ENCODE measurements at regions of chr17 and their contacts with region 1.

Region 1: DNA sequence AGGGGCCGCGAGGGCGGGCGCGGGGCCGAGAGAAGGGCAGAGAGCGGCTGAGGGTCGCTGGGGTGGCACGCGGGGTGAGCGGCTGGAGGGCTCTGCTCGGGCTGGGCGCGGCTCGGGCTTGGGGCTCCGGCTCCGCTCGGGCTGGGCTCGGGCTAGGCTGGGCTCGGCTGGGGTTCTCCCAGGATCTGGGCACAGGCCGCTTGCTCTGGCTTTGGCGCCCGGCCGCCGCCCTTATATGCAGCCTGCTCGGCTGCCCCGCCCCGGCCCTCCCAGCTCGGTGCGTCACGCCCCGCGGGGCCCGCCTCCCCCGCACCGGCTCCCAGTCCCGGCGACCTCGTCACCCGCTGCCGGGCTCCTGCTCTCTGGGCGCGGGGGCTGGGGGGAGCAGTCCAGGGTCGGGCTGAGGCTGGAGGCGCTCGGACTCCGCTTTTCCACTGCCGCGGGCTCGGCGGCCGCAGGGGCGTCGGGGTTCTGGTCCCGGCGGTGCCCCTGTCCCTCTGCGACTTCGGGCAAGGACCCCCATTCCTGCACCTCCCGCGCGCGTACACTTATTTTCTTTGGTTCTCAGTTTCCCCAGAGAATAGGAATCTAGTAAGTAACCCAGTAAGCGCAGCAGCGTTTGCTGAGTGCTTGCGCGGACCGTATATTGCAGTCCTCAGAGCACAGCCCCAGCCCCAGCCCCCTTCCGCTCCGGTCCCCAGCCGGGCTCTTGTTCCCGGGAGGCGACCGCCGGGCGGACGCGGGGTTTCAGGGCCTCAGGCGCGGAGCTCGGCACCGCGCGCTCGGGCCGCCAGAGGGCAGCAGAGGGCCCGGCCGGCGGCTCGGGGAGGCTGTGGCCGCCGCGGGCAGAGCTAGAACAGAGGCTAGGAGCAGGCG is at the start of gene RASD1:
- DNase-seq: peak; percentile 85
- ATAC-seq: peak; percentile 86
- H3K4me3 Mint-ChIP-seq: peak within 1 kb of the TSS; percentile 52
- H3K27ac Mint-ChIP-seq: no peak within 1 kb of the TSS
- H3K4me1 Mint-ChIP-seq: peaks cover 4% of the 10 kb centered on the region
- H3K27me3 Mint-ChIP-seq: peaks cover 15% of the 10 kb centered on the region
- total RNA-seq, gene RASD1: 2.2 to 2.5 TPM

Region 2: DNA sequence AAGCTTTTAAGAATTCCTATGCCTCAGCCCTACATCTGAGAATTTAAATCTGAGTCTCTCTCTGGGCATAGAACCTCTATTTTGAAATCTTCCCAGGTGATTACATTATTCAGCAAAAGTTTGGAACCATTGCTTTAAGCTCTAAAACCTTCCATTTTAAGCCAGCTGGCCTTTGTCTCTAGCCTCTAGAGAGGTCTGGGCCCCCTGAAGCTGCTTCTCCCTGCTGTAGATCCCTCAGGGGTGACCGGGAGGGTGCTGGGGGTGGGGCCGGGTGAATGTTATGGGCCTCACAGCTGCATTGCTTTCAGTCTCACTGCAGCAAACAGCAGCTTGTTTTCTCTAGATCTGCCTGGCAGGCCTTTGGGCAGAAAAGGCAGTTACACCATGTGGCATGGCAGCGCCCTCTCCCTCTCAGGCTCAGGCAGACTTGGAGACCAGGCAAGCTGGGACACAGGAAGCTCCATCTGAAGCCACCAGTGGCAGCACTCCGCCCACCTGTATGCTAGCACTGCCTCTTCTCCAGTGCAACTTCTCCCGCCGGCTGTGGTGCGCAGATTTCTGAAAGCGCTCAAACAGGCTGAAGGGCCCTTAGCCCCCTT is 387.9 kb before region 1 on chr17:
- CTCF ChIA-PET with region 1: no interaction called
- DNase-seq: no peak
- ATAC-seq: no peak
- H3K4me3 Mint-ChIP-seq: no peak overlapping the region
- H3K27ac Mint-ChIP-seq: no peak overlapping the region
- H3K4me1 Mint-ChIP-seq: peaks cover 34% of the 10 kb centered on the region
- H3K27me3 Mint-ChIP-seq: no peaks in the 10 kb centered on the region

Region 3: DNA sequence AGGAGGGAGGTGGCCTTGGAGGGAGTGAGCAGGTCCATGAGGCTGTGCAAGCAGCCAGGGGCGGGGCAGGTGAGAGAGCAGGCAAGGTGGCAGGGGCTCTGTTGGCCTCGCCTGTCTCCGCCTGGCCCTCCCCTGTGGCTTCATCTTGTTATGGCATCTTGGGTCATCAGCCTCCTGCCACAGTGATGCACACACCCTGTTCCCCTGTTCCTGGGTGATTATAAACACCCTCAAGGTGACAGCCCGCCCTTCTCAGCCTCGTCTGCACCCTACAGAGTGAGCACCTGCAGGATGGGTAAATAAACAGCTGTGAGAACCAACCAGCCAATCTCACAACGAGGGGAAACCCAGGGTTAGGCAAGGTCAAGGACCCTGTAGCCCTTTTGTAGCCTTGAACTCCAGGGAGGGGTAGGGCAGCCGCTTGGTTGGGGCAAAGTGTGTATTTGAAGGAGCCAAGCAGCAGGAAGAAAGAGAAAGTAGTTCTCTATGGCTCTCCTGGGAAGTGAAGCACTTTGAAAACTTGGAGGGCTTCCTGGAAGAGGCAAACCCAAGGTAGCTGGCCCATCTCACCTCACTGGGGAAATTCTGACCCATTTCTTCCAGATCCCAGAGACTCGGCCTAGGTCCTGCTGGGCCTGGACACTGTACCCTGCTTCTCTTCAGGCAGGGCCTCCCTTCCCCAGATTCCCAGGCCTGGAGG is 132.6 kb before region 1 on chr17:
- CTCF ChIA-PET with region 1: interaction called, 12 read pairs
- DNase-seq: no peak
- ATAC-seq: no peak
- H3K4me3 Mint-ChIP-seq: no peak overlapping the region
- H3K27ac Mint-ChIP-seq: no peak overlapping the region
- H3K4me1 Mint-ChIP-seq: no peaks in the 10 kb centered on the region
- H3K27me3 Mint-ChIP-seq: peaks cover 36% of the 10 kb centered on the region

Region 4: DNA sequence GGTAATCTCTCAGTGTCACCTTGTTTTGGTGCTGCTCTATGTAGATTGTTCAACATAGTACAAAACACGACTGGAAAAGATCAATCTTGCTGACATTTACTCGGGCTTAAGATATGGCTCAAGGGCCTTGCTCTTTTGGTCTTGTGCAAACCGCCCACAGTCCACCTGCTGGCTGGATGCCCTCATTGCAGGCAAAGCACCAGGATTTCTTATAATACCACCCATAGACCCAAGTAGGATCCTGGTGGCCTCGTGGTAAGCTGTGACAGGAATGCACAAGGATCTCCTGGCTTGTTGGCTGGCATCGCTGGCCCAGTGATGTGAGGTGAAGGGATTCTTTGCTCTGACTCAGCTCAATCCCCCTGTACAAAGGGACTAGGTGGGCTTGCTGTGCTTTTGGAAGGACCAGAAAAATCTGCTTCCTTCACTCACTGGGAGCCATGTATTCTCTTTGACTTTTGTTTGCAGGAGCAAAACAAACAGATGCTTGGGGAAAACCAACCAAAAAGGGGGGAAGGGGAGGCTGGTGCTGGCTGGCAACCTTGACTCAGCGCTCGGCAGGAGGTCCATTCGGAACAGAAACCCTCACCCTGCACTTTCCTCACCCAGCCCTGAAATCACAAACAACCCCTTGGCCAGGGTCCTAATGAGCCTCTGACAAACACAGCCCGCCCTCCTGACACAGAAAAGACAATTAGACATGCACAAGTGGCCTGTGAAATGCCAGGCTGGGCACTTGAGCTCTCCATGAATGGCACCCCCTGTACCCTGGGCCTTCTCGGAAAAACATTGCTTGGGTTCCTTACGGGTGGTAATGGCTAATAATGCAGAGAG is 56.2 kb before region 1 on chr17:
- CTCF ChIA-PET with region 1: interaction called, 12 read pairs
- DNase-seq: peak; percentile 83
- ATAC-seq: peak; percentile 88
- H3K4me3 Mint-ChIP-seq: no peak overlapping the region
- H3K27ac Mint-ChIP-seq: peak overlapping the region; percentile 28
- H3K4me1 Mint-ChIP-seq: peaks cover 2% of the 10 kb centered on the region
- H3K27me3 Mint-ChIP-seq: no peaks in the 10 kb centered on the region

Region 5: DNA sequence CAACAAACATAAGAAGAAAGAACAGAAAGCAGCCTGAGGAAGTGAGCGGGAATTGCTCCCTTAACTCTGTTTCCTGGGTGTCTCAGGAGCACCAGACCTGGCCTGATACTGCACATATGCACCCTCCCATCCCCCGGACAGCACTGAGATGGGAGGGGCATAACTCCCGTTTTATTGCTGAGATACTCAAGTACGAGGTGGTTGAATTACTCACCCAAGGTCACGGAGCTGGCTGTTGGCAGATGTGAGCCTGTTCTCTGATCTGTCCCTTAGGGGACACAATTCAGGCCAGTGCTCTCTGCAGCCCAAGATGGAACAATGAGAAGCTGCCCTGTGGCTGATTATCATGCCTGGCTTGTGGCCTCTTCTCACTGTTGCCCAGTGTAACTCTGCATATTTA is 28.7 kb before region 1 on chr17:
- CTCF ChIA-PET with region 1: interaction called, 12 read pairs
- DNase-seq: no peak
- ATAC-seq: no peak
- H3K4me3 Mint-ChIP-seq: no peak overlapping the region
- H3K27ac Mint-ChIP-seq: no peak overlapping the region
- H3K4me1 Mint-ChIP-seq: peaks cover 5% of the 10 kb centered on the region
- H3K27me3 Mint-ChIP-seq: peaks cover 46% of the 10 kb centered on the region

Region 6: DNA sequence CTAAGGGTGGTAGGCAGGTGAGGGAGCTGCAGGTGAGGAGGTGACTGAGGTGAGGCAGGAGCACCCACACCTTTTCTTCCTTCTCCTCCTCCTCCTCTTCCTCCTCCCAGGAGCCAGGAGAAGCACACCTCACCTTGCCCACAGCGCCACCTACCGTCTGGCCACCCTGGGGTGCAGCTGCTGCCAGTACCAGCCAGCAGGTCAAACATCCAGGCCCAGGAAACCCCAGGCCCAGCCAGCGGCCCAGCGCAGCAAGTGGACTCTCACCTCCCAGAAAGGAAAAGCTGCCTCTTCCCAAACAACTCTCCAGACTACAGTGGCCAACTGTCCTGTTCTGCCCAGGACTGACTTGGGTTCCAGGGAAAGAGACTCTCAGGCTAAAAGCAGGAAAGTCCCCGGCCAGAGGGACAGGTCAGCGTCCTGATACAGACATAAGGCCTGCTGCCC is 72.3 kb after region 1 on chr17:
- CTCF ChIA-PET with region 1: interaction called, 37 read pairs
- DNase-seq: peak; percentile 74
- ATAC-seq: peak; percentile 73
- H3K4me3 Mint-ChIP-seq: no peak overlapping the region
- H3K27ac Mint-ChIP-seq: no peak overlapping the region
- H3K4me1 Mint-ChIP-seq: no peaks in the 10 kb centered on the region
- H3K27me3 Mint-ChIP-seq: no peaks in the 10 kb centered on the region

Region 7: DNA sequence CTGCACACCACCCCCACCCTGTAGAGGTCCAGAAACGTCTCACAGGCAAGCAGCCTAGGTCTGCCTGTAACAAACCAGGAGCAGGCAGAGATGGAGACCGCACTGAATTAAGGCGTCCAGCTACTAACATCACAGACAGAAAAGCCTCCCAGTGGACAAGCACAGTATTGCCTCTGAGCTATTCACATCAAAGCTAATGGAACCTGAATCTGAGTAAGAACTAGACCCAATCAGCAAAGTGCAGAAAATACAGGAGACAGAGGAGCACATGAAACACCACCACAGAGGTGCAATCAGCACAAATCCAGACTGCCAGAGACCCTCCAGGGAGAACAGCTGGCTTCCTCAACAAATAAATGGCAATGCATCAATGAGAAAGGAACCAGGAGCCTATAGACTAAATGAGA is 117.3 kb after region 1 on chr17:
- CTCF ChIA-PET with region 1: interaction called, 14 read pairs
- DNase-seq: peak; percentile 69
- ATAC-seq: peak; percentile 97
- H3K4me3 Mint-ChIP-seq: no peak overlapping the region
- H3K27ac Mint-ChIP-seq: no peak overlapping the region
- H3K4me1 Mint-ChIP-seq: no peaks in the 10 kb centered on the region
- H3K27me3 Mint-ChIP-seq: peaks cover 7% of the 10 kb centered on the region

Region 8: DNA sequence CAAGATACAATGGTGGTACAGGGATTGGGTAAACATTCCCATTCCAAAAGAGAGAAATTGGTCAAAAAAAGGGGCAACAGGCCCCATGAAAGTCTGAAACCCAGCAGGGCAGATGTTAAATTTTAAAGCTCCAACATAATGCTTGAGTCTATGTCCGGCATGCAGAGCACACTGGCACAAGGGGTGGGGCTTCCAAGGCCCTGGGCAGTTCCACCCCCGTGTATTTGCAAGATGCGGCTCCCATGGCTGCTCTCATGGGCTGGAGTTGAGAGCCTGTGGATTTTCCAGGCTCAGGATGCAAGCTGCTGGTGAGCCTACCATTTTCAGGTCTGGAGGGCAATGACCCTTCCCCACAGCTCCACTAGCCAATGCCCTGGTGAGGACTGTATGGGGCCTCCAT is 156.9 kb after region 1 on chr17:
- CTCF ChIA-PET with region 1: no interaction called
- DNase-seq: no peak
- ATAC-seq: no peak
- H3K4me3 Mint-ChIP-seq: no peak overlapping the region
- H3K27ac Mint-ChIP-seq: no peak overlapping the region
- H3K4me1 Mint-ChIP-seq: no peaks in the 10 kb centered on the region
- H3K27me3 Mint-ChIP-seq: peaks cover 6% of the 10 kb centered on the region